Activated naive CD4-positive, alpha-beta T cell treated with anti-CD3 and anti-CD28 coated beads for 36 hours (primary cell): ENCODE measurements at regions of chr9 and their contacts with region 1.

Region 1: GRCh38 chr9:94839398-94839797 is 112.9 kb downstream of the AOPEP start:
- DNase-seq: no peak
- H3K4me3 Mint-ChIP-seq: no peak overlapping the region
- H3K27ac Mint-ChIP-seq: no peak overlapping the region
- H3K4me1 Mint-ChIP-seq: peaks cover 19% of the 10 kb centered on the region
- H3K27me3 Mint-ChIP-seq: no peaks in the 10 kb centered on the region

Region 2: GRCh38 chr9:94586814-94587213 is 252.6 kb before region 1 on chr9:
- CTCF ChIA-PET with region 1: no interaction called
- intact Hi-C with region 1: no loop called
- DNase-seq: no peak
- H3K4me3 Mint-ChIP-seq: no peak overlapping the region
- H3K27ac Mint-ChIP-seq: no peak overlapping the region
- H3K4me1 Mint-ChIP-seq: peaks cover 26% of the 10 kb centered on the region
- H3K27me3 Mint-ChIP-seq: peaks cover 9% of the 10 kb centered on the region

Region 3: GRCh38 chr9:94657021-94657725 is 182.2 kb before region 1 on chr9:
- CTCF ChIA-PET with region 1: no interaction called
- intact Hi-C with region 1: no loop called
- DNase-seq: no peak
- H3K4me3 Mint-ChIP-seq: no peak overlapping the region
- H3K27ac Mint-ChIP-seq: no peak overlapping the region
- H3K4me1 Mint-ChIP-seq: peaks cover 20% of the 10 kb centered on the region
- H3K27me3 Mint-ChIP-seq: no peaks in the 10 kb centered on the region

Region 4: GRCh38 chr9:94812343-94812742 is 27.1 kb before region 1 on chr9:
- CTCF ChIA-PET with region 1: no interaction called
- intact Hi-C with region 1: no loop called
- DNase-seq: peak; percentile 41
- H3K4me3 Mint-ChIP-seq: no peak overlapping the region
- H3K27ac Mint-ChIP-seq: no peak overlapping the region
- H3K4me1 Mint-ChIP-seq: peaks cover 12% of the 10 kb centered on the region
- H3K27me3 Mint-ChIP-seq: no peaks in the 10 kb centered on the region

Region 5: GRCh38 chr9:94860968-94861871 is 21.8 kb after region 1 on chr9:
- CTCF ChIA-PET with region 1: no interaction called
- intact Hi-C with region 1: loop called (anchors 1 kb)
- DNase-seq: peak; percentile 83
- H3K4me3 Mint-ChIP-seq: peak overlapping the region; percentile 28
- H3K27ac Mint-ChIP-seq: peak overlapping the region; percentile 54
- H3K4me1 Mint-ChIP-seq: peaks cover 38% of the 10 kb centered on the region
- H3K27me3 Mint-ChIP-seq: no peaks in the 10 kb centered on the region